A673 (cell line): ENCODE measurements at regions of chr2 and their contacts with region 1.

Region 1: DNA sequence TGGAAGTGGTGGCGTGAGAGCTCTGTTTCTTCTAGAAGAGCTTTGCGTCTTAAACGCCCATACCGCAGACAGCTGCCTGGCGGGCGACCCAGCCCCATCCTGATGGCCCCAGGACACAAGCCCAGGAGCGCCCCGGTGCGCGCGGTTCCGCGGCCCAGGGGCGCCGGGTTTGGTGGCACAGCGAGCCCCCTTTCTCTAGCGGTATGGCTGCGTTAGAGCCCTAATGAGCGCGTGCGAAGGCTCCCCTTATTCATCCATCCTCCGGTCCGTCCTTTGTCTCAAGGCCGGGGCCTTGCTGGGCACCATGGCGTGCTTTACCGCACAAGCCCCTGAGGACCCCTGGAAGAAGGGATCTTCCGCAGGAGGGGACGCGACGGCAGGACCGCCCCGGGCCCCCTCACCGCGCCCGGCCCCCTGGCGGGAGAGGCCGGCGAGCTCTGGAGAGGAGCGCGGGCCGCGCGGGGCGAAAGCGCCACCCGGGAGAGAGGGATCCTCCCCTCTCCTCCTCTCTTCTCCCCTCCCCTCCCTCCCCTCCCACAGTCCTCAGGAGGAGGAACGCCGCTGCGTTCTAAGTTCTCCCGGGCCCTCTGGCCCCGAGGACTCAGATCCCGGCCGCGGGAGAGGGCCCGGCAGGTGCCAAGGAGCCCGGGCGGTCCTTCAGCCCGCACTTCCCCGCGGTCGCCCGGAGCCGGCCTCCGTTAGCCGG is 626 bp upstream of the SLC1A4 start:
- DNase-seq: peak; percentile 92
- H3K4me3 ChIP-seq: peak overlapping the region; percentile 97
- H3K27ac ChIP-seq: peak overlapping the region; percentile 97
- H3K4me1 ChIP-seq: peaks cover 26% of the 10 kb centered on the region
- H3K27me3 ChIP-seq: no peaks in the 10 kb centered on the region
- CTCF ChIP-seq: 0 out of 2 replicates have a peak, but pooled peaks have one; percentile 22

Region 2: DNA sequence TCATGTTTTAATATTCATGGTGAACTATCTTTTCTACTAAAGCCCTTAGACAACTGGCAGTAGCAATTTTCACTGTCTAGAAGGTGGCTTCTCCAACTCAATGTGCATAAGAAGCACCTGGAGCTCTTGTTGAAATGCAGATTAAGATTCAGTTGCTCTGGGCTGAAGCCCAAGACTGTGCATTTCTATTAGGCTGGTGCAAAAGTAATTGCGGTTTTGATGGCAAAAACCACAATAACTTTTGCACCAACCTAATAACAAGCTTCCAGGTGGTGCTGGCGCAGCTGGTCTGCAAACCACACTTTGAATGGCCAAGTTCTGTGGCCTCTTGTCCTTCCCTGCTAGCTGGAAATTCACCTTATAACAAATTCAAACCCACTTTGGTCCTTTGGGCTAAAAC is 942.6 kb before region 1 on chr2:
- CTCF ChIA-PET with region 1: no interaction called
- POLR2A ChIA-PET with region 1: interaction called, 19 read pairs
- intact Hi-C with region 1: no loop called
- DNase-seq: no peak
- H3K4me3 ChIP-seq: no peak overlapping the region
- H3K27ac ChIP-seq: no peak overlapping the region
- H3K4me1 ChIP-seq: peaks cover 4% of the 10 kb centered on the region
- H3K27me3 ChIP-seq: no peaks in the 10 kb centered on the region
- CTCF ChIP-seq: no peak

Region 3: DNA sequence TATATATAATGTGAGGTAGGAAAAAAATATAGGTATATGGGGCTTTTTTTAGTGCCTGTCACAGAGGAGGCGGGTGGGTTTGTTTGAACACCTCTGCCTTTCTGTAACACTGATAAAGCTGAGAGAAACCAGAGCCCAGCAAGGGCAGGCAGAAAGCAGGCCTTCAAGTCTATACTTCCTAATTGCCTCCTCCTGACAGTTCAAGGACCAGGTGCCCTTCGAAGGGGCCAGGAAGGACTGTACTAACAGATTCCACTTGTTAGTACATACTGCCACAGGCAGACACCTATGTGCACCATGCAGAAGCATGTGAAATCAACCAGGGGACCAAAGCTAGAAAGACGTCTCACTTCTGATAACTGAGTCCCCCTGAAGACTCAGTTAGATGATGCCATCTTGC is 14.5 kb after region 1 on chr2:
- CTCF ChIA-PET with region 1: no interaction called
- POLR2A ChIA-PET with region 1: no interaction called
- intact Hi-C with region 1: no loop called
- DNase-seq: no peak
- H3K4me3 ChIP-seq: no peak overlapping the region
- H3K27ac ChIP-seq: no peak overlapping the region
- H3K4me1 ChIP-seq: peaks cover 5% of the 10 kb centered on the region
- H3K27me3 ChIP-seq: no peaks in the 10 kb centered on the region
- CTCF ChIP-seq: no peak

Region 4: DNA sequence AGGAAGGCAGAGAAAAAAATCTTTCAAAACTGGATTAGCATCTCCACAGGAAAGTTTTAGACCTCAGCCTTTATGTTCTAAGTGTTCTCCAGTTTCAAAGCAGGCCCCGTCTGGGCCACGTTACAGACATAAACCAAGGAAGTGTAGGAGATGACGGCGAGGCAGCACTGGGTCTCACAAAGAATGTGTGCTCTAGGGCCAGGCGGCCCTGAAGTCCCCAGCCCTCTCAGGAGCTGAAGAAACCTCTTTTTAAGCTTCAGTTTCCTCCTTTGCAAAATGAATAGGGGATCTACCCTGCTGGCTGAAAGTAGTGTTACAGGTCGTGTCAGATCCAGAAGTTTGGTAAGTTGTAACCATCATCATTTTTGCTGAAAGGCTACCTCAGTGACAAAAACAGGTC is 362.1 kb after region 1 on chr2:
- CTCF ChIA-PET with region 1: no interaction called
- POLR2A ChIA-PET with region 1: no interaction called
- intact Hi-C with region 1: no loop called
- DNase-seq: peak; percentile 60
- H3K4me3 ChIP-seq: peak overlapping the region; percentile 8
- H3K27ac ChIP-seq: peak overlapping the region; percentile 59
- H3K4me1 ChIP-seq: peaks cover 55% of the 10 kb centered on the region
- H3K27me3 ChIP-seq: no peaks in the 10 kb centered on the region
- CTCF ChIP-seq: peak; percentile 45; the same call in 1 of the 2 replicates

Region 5: DNA sequence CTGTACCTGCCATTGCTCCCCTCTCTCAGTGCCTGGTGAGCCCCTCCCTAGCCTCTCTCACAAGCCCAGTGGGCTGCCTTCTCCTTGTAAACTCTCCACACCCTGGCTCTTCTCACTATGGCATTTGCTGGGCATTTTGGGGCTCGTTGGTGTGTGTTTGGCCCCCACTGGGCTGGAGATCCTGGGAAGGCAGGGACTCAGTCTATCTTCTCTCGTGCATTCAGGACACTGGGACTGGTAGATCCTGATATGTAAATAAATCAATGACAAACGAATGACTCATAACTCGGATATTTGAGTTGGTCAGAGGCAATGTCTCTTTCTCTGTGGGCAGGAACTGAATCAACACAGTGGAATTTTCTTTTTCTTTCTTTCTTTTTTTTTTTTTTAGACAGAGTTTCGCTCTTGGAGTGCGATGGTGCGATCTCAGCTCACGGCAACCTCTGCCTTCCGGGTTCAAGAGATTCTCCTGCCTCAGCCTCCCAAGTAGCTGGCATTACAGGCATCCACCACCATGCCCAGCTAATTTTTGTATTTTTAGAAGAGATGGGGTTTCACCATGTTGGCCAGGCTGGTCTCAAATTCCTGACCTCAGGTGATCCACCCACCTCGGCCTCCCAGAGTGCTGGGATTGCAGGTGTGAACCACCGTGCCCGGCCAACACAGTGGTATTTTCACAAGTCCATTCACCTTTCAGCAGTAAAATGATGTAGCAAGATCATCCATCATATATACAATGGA is 588.5 kb after region 1 on chr2:
- CTCF ChIA-PET with region 1: no interaction called
- POLR2A ChIA-PET with region 1: no interaction called
- intact Hi-C with region 1: loop called (anchors 5 kb)
- DNase-seq: peak; percentile 86
- H3K4me3 ChIP-seq: no peak overlapping the region
- H3K27ac ChIP-seq: peak overlapping the region; percentile 39
- H3K4me1 ChIP-seq: peaks cover 16% of the 10 kb centered on the region
- H3K27me3 ChIP-seq: no peaks in the 10 kb centered on the region
- CTCF ChIP-seq: no peak